ENCODE measurements at regions of chr13 and their contacts with region 1.

Region 1: DNA sequence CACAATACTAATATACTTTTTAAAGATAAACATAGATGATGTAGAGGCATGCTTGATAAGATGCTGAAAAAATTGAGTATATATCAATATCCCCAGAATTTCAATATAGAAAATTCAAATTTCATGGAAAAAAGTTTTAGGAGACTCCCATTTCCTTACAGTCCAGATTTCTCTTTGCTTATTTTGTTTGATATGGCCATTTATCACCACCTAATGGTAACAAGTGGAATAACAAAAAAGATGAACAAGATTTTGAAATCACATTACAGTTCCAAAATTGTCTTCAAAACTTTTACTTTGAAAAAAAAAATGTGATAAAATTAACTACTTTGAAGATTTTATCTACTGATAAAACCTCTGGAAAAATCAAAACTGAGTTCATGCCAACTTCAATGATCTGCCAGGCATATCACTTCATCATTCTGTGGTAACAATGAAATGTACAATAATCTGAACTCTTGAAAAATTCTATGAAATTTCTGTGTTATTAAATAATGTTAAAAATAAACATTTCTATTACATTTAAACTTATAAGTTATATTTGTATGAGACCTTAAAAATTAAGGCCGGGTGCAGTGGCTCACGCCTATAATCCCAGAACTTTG is 17.5 kb downstream of the MIPEP start:
- DNase-seq: no peak
- ATAC-seq: peak; percentile 20; the same call in 1 of the 3 replicates
- H3K4me3 ChIP-seq: no peak overlapping the region
- H3K27ac ChIP-seq: peak overlapping the region; percentile 45
- H3K4me1 ChIP-seq: peaks cover 9% of the 10 kb centered on the region
- H3K27me3 ChIP-seq: no peaks in the 10 kb centered on the region
- CTCF ChIP-seq: peak; percentile 30 to 62 (median 48); a peak in 5 of 6 replicates
- EP300 ChIP-seq: no peak
- POLR2A ChIP-seq: no peak
- RAD21 ChIP-seq: peak; percentile 78

Region 2: DNA sequence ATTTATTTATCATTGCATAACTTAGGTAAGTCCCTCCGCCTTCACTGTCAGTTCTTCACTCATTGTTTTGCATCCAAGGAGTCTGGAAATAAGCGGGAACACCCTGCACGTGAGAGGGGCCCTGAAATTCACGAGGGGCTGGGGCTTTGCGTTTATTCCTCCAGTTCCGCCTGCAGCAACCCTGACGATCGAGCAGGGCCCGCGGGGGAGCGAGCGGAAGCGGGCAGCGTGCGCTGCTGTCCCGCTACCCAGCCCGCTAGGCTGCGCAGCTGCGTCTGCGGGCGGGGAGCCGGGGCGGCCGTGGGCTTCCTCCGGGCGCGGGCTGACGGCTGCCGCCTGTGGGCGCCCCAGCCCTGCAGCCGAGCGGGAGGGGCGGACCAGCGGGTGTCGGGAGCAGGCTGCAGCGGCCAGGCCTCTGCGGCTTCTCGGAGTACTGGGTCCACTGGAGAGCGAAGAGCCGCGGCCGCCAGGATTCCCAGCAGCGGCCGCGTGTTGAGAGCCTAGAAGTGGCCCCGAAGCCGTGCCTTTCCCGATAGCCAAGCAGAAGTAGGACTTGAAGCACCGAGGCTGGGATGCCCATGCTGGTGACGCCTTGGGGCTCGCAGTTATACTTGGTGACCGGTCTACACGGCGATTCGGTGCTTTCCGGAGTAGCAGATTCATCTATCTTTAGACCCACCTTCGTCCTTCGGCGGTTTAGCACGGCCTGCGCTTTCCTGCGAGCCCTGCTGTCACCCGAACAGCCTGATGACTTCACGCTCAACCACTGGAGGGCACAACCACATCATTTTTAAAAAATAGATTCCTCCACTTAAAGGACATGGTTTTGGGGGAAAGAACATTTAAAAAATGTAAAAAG is 405.3 kb before region 1 on chr13:
- CTCF ChIA-PET with region 1: interaction called, 7 read pairs
- POLR2A ChIA-PET with region 1: no interaction called
- RAD21 ChIA-PET with region 1: interaction called, 3 read pairs
- SMC1A ChIA-PET with region 1: interaction called, 12 read pairs
- in situ Hi-C with region 1: loop called (anchors 5 kb)
- intact Hi-C with region 1: loop called (anchors 1 kb)
- DNase-seq: peak; percentile 73
- ATAC-seq: peak; percentile 97
- H3K4me3 ChIP-seq: peak overlapping the region; percentile 46; the same call in 1 of the 2 replicates
- H3K27ac ChIP-seq: peak overlapping the region; percentile 29
- H3K4me1 ChIP-seq: peaks cover 33% of the 10 kb centered on the region
- H3K27me3 ChIP-seq: no peaks in the 10 kb centered on the region
- CTCF ChIP-seq: peak; percentile 44 to 75 (median 57); a peak in 5 of 6 replicates
- EP300 ChIP-seq: peak in 1 of 2 experiments; percentile 21; a peak in 1 of 4 replicates
- POLR2A ChIP-seq: peak; percentile 74
- RAD21 ChIP-seq: peak; percentile 78

Region 3: GRCh38 chr13:23579072-23579895 is 292.4 kb before region 1 on chr13:
- CTCF ChIA-PET with region 1: interaction called, 3 read pairs
- POLR2A ChIA-PET with region 1: no interaction called
- RAD21 ChIA-PET with region 1: interaction called, 3 read pairs
- SMC1A ChIA-PET with region 1: no interaction called
- in situ Hi-C with region 1: no loop called
- intact Hi-C with region 1: loop called (anchors 2 kb)
- DNase-seq: no peak
- ATAC-seq: peak; percentile 89
- H3K4me3 ChIP-seq: peak overlapping the region; percentile 86
- H3K27ac ChIP-seq: peak overlapping the region; percentile 92
- H3K4me1 ChIP-seq: peaks cover 17% of the 10 kb centered on the region
- H3K27me3 ChIP-seq: no peaks in the 10 kb centered on the region
- CTCF ChIP-seq: no peak
- EP300 ChIP-seq: no peak
- POLR2A ChIP-seq: peak; percentile 83
- RAD21 ChIP-seq: no peak

Region 4: GRCh38 chr13:23810685-23811240 is 61.0 kb before region 1 on chr13:
- CTCF ChIA-PET with region 1: interaction called, 8 read pairs
- POLR2A ChIA-PET with region 1: no interaction called
- RAD21 ChIA-PET with region 1: interaction called, 7 read pairs
- SMC1A ChIA-PET with region 1: interaction called, 10 read pairs
- in situ Hi-C with region 1: no loop called
- intact Hi-C with region 1: loop called (anchors 2 kb)
- DNase-seq: no peak
- ATAC-seq: peak; percentile 76
- H3K4me3 ChIP-seq: no peak overlapping the region
- H3K27ac ChIP-seq: peak overlapping the region; percentile 81
- H3K4me1 ChIP-seq: peaks cover 56% of the 10 kb centered on the region
- H3K27me3 ChIP-seq: no peaks in the 10 kb centered on the region
- CTCF ChIP-seq: peak; percentile 41 to 57 (median 51); a peak in 4 of 6 replicates
- EP300 ChIP-seq: 0 out of 4 replicates have a peak, but pooled peaks of 1 of the 2 experiments have one; percentile 35
- POLR2A ChIP-seq: no peak
- RAD21 ChIP-seq: peak; percentile 53

Region 5: DNA sequence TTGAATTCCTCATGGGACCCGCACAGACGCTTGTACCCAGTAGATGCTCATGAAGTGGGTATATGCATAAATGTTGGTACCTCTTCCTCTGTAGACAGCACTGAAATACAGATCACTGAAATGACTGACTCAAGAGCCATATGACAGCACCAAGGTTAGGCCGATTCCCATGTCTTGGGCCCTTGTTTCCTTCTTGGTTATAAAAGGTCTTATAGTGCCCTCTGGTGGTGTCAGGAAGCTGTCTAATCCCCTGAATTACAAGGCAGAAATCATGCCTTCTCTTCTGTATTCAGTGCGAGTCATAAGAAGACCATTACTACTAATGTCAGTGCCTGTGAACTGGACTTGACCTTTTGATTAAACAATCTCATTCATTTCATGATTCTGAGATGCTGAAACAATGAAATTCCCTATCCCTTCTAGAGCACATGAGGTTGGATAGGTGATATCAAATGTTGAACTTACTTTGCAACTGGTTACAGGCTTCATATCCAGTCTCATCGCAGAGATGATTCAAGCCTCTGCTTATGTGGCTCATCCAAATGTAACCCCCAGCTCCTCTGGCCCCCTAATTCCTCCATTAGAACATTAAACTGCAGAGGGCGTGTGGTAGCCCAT is 348.5 kb after region 1 on chr13:
- CTCF ChIA-PET with region 1: no interaction called
- POLR2A ChIA-PET with region 1: interaction called, 3 read pairs
- RAD21 ChIA-PET with region 1: no interaction called
- SMC1A ChIA-PET with region 1: interaction called, 3 read pairs
- in situ Hi-C with region 1: no loop called
- intact Hi-C with region 1: loop called (anchors 1 kb)
- DNase-seq: no peak
- ATAC-seq: peak; percentile 89
- H3K4me3 ChIP-seq: no peak overlapping the region
- H3K27ac ChIP-seq: no peak overlapping the region
- H3K4me1 ChIP-seq: peaks cover 35% of the 10 kb centered on the region
- H3K27me3 ChIP-seq: no peaks in the 10 kb centered on the region
- CTCF ChIP-seq: peak; percentile 65 to 89 (median 71)
- EP300 ChIP-seq: no peak
- POLR2A ChIP-seq: no peak
- RAD21 ChIP-seq: peak; percentile 97